ENCODE measurements at regions of chr7 and their contacts with region 1.

Region 1: GRCh38 chr7:143287935-143288826 is at the start of gene CASP2:
- DNase-seq: peak; percentile 99
- H3K4me3 Mint-ChIP-seq: peak within 1 kb of the TSS; percentile 95
- H3K27ac Mint-ChIP-seq: peak within 1 kb of the TSS; percentile 87
- H3K4me1 Mint-ChIP-seq: peaks cover 47% of the 10 kb centered on the region
- H3K27me3 Mint-ChIP-seq: no peaks in the 10 kb centered on the region
- total RNA-seq, gene CASP2: 116 and 122 TPM in 2 replicates

Region 2: GRCh38 chr7:142583386-142583785 is 704.8 kb before region 1 on chr7:
- intact Hi-C with region 1: no loop called
- DNase-seq: peak; percentile 13
- H3K4me3 Mint-ChIP-seq: no peak overlapping the region
- H3K27ac Mint-ChIP-seq: peak overlapping the region; percentile 65
- H3K4me1 Mint-ChIP-seq: peaks cover 48% of the 10 kb centered on the region
- H3K27me3 Mint-ChIP-seq: no peaks in the 10 kb centered on the region

Region 3: DNA sequence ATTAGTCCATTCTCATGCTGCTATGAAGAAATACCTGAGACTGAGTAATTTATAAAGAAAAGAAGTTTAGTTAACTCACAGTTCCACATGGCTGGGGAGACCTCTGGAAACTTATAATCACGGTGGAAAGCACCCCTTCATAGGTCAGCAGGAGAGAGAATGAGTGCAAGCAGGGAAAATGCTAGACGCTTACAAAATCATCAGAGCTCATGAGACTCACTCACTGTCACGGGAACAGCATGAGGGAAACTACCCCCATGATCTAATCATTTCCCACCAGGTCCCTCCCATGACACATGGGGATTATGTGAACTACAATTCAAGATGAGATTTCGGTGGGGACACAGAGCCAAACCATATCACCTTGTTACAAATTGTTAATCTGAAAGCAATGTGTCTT is 89.1 kb before region 1 on chr7:
- intact Hi-C with region 1: no loop called
- DNase-seq: no peak
- H3K4me3 Mint-ChIP-seq: no peak overlapping the region
- H3K27ac Mint-ChIP-seq: no peak overlapping the region
- H3K4me1 Mint-ChIP-seq: no peaks in the 10 kb centered on the region
- H3K27me3 Mint-ChIP-seq: peaks cover 21% of the 10 kb centered on the region

Region 4: GRCh38 chr7:143305423-143306070 is 17.4 kb after region 1 on chr7:
- intact Hi-C with region 1: loop called (anchors 2 kb)
- DNase-seq: peak; percentile 36
- H3K4me3 Mint-ChIP-seq: no peak overlapping the region
- H3K27ac Mint-ChIP-seq: peak overlapping the region; percentile 48
- H3K4me1 Mint-ChIP-seq: peaks cover 52% of the 10 kb centered on the region
- H3K27me3 Mint-ChIP-seq: no peaks in the 10 kb centered on the region

Region 5: DNA sequence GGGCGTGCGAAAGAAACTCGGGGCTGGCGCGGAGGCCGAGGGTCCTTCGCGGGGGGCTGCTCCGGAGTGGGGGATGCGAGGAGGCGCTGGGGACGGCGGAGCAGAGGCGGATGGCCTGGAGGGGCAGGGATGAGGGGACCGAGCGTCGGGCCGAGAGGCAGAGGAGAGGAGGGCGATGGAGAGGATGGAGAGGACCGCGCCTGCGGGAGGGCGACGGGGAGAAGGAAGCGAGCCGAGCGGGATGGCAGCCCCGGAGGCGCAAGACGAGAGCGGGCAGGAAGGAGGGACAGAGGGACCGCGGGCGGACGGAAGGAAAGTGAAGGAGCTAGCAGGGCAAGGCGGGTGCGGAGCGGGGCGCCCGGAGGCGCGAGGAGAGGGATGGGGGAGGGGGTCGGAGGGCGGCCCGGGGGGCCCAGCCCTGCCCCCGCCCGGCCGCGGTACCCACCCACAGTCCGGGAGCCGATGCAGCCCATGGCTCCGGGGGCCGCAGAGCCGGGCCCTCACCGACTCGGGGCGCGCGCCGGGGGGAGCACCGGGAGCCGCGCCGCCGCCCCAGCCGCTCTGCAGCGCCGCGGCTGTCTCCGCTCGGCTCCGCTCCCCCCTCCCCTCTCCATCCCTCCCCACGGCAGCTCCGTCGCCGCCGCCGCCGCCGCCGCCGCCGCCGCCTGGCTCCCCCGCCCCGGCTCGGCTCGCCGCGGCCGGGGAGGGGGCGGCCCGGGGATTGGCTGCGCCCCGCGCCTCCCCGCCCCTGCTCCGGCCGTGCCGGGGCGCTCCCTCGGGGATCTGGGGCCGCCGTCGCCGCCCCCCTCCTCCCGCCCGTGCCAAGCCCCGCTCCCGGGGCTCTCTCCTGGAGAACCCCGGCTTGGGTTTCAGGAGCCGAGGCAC is 74.2 kb after region 1 on chr7 and contains the start of gene FAM131B:
- intact Hi-C with region 1: loop called (anchors 5 kb)
- DNase-seq: no peak
- H3K4me3 Mint-ChIP-seq: peak within 1 kb of the TSS; percentile 81
- H3K27ac Mint-ChIP-seq: no peak within 1 kb of the TSS
- H3K4me1 Mint-ChIP-seq: peaks cover 9% of the 10 kb centered on the region
- H3K27me3 Mint-ChIP-seq: peaks cover 73% of the 10 kb centered on the region
- total RNA-seq, gene FAM131B: 1.3 and 2.0 TPM in 2 replicates